Activated CD4-positive, alpha-beta T cell treated with anti-CD3 and anti-CD28 coated beads, Interleukin-2, amount 10 ng/mL, durations not matched to agents 24 days and 14 days (primary cell): ENCODE measurements at regions of chr15 and their contacts with region 1.

Region 1: GRCh38 chr15:64067564-64068030 is 21.3 kb upstream of the DAPK2 start:
- DNase-seq: peak; percentile 92
- H3K4me3 Mint-ChIP-seq: no peak overlapping the region
- H3K27ac Mint-ChIP-seq: no peak overlapping the region
- H3K4me1 Mint-ChIP-seq: peaks cover 7% of the 10 kb centered on the region
- H3K27me3 Mint-ChIP-seq: no peaks in the 10 kb centered on the region

Region 2: DNA sequence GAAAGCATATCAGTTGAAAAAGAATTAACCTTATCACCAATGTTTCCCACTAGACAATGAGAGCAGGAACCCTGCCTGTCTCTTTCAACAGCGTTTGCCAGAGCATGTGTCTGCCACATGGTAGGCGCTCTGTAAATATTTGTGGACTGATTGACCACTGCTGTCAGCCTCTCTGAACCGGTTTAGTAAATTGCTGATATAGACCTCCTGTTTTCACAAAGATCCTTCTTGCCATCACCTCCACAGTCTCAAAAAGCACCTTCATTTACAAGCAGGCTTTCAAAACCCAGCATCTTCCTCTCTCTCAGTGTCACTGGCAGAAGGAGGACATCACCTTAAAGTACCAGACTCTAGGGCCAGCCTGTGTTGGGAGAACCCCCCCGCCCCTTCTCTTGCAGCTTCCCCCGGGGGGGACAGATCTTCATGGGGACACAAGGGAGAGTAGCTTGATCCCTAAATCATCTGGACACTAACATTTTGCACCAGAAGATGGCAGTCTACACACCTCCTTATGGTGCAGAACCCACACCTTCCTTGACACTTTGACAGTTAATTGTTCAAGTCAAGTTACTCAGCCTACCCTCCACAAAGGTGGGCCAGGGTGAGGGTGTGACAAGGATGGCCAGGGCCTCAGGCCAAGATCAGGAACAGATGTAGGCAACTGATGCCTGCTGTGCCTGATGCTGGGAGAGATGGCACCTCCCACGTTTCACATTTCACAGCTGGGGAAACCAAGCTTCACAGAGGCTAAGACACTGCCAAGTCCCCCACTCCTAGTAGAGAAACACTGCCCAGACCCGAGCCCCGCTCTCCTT is 601.0 kb before region 1 on chr15:
- intact Hi-C with region 1: loop called (anchors 5 kb)
- DNase-seq: peak; percentile 91
- H3K4me3 Mint-ChIP-seq: no peak overlapping the region
- H3K27ac Mint-ChIP-seq: no peak overlapping the region
- H3K4me1 Mint-ChIP-seq: peaks cover 23% of the 10 kb centered on the region
- H3K27me3 Mint-ChIP-seq: peaks cover 13% of the 10 kb centered on the region

Region 3: GRCh38 chr15:63610200-63610841 is 457.3 kb before region 1 on chr15:
- intact Hi-C with region 1: loop called (anchors 1 kb)
- DNase-seq: peak; percentile 93
- H3K4me3 Mint-ChIP-seq: peak overlapping the region; percentile 32
- H3K27ac Mint-ChIP-seq: peak overlapping the region; percentile 92
- H3K4me1 Mint-ChIP-seq: peaks cover 27% of the 10 kb centered on the region
- H3K27me3 Mint-ChIP-seq: no peaks in the 10 kb centered on the region

Region 4: DNA sequence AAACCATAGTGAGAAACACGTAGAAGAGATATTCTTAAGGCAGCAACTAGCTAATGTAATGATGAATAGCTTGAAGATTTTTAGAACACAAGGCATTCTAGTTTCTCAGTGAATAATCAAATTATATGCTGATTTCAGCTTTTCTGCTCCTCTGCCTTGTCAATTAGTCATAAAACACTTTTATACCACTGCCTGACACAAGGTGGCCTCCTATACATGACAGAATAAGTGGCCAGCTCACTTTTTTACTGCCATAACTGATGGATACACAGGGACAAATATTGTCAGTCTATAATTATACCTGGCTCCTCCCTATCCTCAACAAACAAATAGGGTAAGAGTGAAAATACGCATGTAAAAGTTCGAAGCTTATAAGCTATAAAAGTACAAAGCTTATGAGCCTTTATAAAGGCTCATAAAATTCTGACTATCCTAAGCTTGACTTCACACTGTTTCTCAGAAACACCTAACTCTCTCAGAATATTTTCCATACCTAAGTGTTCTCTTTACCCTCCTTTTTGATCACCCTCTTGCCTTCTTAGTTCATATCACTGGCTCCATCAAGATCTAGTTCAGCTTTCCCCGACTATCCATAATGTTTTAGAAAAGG is 315.4 kb before region 1 on chr15:
- intact Hi-C with region 1: loop called (anchors 1 kb)
- DNase-seq: peak; percentile 85
- H3K4me3 Mint-ChIP-seq: no peak overlapping the region
- H3K27ac Mint-ChIP-seq: peak overlapping the region; percentile 44
- H3K4me1 Mint-ChIP-seq: peaks cover 8% of the 10 kb centered on the region
- H3K27me3 Mint-ChIP-seq: no peaks in the 10 kb centered on the region

Region 5: GRCh38 chr15:63833021-63833696 is 234.4 kb before region 1 on chr15:
- intact Hi-C with region 1: loop called (anchors 5 kb)
- DNase-seq: peak; percentile 84
- H3K4me3 Mint-ChIP-seq: peak overlapping the region; percentile 99
- H3K27ac Mint-ChIP-seq: peak overlapping the region; percentile 100
- H3K4me1 Mint-ChIP-seq: peaks cover 46% of the 10 kb centered on the region
- H3K27me3 Mint-ChIP-seq: peaks cover 6% of the 10 kb centered on the region

Region 6: GRCh38 chr15:63945007-63945788 is 122.4 kb before region 1 on chr15:
- intact Hi-C with region 1: loop called (anchors 5 kb)
- DNase-seq: peak; percentile 90
- H3K4me3 Mint-ChIP-seq: no peak overlapping the region
- H3K27ac Mint-ChIP-seq: peak overlapping the region; percentile 45
- H3K4me1 Mint-ChIP-seq: peaks cover 21% of the 10 kb centered on the region
- H3K27me3 Mint-ChIP-seq: no peaks in the 10 kb centered on the region

Region 7: DNA sequence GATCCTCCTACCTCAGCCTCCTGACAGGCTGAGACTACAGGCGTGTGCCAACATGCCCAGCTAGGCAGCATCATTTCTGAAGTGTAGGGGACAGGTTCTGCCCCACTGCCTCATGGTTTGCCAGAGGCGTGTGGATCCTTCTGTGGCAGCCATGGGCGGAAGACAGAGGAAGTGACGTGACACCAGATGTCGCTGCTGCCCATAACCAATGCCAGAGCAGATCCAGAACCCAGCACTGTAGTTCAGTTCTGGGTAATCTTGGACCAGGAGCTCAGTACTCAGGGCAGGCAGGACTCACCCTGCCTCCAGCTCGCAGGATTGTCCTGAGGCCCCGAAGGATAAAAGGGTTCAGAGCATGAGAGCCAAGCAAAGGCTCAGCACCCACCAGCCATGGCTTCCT is 699.6 kb after region 1 on chr15:
- intact Hi-C with region 1: no loop called
- DNase-seq: no peak
- H3K4me3 Mint-ChIP-seq: no peak overlapping the region
- H3K27ac Mint-ChIP-seq: no peak overlapping the region
- H3K4me1 Mint-ChIP-seq: no peaks in the 10 kb centered on the region
- H3K27me3 Mint-ChIP-seq: peaks cover 15% of the 10 kb centered on the region